ENCODE measurements at regions of chr12 and their contacts with region 1.

Region 1: DNA sequence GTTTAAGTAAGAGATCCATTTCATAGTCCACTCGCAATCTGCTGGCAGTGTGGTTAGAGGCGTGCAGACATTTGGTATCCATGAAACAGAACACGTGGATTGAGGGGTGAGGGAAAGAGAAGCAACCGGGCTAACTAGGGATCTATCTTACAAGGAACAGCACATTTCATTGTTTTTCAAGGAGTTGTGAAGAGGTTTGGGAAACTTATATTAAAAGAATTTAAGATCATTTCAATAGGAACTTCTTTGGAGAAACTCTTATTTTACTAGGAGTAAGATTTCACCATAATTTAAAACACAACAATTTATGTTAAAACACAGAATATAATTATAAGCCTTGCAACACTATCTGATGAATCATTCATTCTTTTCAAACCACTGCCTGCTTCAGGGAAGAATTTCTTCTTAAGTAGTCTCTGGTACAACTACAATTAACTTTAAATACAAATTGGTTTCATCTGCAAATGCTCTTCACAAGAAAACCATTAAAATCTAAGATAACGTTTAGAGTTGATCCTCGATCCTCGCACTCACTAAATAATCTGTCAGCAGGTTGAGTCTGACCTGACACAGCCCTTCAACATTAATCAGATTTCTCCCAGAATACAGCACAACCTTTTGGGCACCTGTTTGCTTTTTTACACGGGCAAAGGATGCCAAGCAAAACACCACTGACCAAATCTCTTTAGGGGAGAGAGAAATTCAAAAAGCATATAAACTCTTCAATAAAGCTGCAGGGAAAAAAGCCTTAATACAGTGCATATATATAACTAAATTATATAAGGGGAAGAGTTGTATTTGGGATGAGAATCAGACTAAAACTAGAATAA is 27.3 kb downstream of the PPTC7 start:
- DNase-seq: no peak
- H3K4me3 ChIP-seq: no peak overlapping the region
- H3K27ac ChIP-seq: no peak overlapping the region
- H3K4me1 ChIP-seq: peaks cover 19 to 95% (median 68%) of the 10 kb centered on the region in 6 donors
- H3K27me3 ChIP-seq: no peaks in the 10 kb centered on the region
- CTCF ChIP-seq: no peak
- POLR2A ChIP-seq: no peak

Region 2: GRCh38 chr12:110583137-110584059 is 27.6 kb after region 1 on chr12 and contains the start of gene PPTC7:
- intact Hi-C with region 1: loop called (anchors 2 kb)
- DNase-seq: peak; percentile 100
- H3K4me3 ChIP-seq: peak within 1 kb of the TSS; percentile 84 to 98 (median 88)
- H3K27ac ChIP-seq: peak within 1 kb of the TSS; percentile 55 to 96 (median 92)
- H3K4me1 ChIP-seq: peaks cover 48 to 78% (median 65%) of the 10 kb centered on the region in 6 donors
- H3K27me3 ChIP-seq: no peaks in the 10 kb centered on the region
- CTCF ChIP-seq: no peak
- POLR2A ChIP-seq: peak in 2 of 3 donors; percentile 40 to 68
- total RNA-seq, gene PPTC7: 20.1 to 27.3 (median 26.5) TPM

Region 3: DNA sequence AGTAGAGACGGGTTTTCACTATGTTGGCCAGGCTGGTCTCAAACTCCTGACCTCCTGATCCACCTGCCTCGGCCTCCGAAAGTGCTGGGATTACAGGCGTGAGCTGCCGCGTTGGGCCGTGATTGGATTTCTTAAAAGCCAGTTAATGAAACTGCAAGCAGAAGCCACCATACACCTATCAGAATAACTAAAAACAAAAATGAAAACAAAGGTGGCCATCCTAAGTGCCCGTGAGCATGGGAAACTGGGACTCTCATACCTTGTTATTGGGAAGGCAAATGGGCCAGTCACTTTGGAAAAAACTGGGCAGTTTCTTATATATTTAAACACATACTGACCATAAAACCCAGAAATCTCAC is 50.4 kb after region 1 on chr12:
- intact Hi-C with region 1: no loop called
- DNase-seq: no peak
- H3K4me3 ChIP-seq: peak overlapping the region in 5 of 8 donors; percentile 17 to 63 (median 25)
- H3K27ac ChIP-seq: peak overlapping the region; percentile 72 to 94 (median 92)
- H3K4me1 ChIP-seq: peaks cover 0 to 72% (median 19%) of the 10 kb centered on the region in 6 donors
- H3K27me3 ChIP-seq: no peaks in the 10 kb centered on the region
- CTCF ChIP-seq: no peak
- POLR2A ChIP-seq: no peak

Region 4: DNA sequence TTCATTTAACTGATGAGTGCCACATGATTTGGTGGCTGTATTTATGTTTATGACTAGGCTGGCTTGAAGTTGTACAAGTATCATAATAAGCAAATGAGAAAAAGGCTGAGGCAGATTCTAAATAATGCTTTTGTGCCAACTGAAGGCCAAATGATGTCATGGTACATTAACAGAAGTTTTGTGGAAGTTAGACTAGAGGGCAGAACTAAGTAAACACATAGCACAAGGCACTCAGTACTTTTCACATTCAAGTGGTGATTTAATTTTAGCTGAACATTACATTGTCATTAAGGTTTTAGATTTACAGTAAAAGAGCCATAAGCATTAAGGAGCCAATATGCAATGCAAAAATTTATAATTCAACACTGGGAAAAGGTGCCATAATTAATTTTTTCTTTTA is 165.8 kb after region 1 on chr12:
- intact Hi-C with region 1: no loop called
- DNase-seq: no peak
- H3K4me3 ChIP-seq: no peak overlapping the region
- H3K27ac ChIP-seq: no peak overlapping the region
- H3K4me1 ChIP-seq: peaks cover 0 to 47% (median 10%) of the 10 kb centered on the region in 6 donors
- H3K27me3 ChIP-seq: no peaks in the 10 kb centered on the region
- CTCF ChIP-seq: no peak
- POLR2A ChIP-seq: no peak

Measured in spleen (tissue), 13 donors.